Caco-2 (cell line): ENCODE measurements at regions of chr21 and their contacts with region 1.

Region 1: DNA sequence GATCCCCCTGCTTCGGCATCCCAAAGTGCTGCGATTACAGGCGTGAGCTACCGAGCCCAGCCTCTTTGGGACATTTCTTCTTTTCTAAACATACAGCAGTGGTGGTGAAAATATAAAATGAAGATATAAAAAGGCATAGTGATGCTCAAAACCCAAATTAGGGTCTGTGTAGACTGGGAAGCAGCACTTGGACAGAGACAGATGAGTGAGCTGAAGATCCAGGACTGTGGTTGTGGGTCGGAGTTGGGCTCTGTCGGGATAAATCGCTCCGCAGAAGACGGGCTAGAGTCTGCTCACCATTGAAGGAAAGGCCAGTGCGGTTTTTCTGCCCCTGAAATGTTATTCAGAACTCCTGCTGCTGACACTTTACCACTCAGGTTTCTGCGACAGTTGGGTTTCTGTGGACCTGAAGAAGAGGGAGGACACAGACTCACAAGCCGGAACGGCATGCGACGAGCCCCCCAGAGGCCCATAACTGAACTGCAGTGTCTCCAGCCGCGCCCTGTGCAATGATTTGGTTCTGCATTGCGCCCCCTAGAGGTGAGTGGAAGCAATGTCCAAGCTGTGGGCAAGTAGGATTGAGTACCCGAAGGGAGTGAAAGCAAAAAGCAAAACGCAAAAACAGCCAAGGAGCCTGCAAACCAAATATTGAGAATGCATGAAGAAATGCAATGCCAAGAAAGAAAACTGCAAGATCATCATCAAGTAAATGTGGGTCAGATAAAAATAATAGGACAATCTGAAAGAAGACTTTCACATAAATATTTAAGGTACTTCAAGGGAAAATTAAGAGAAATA is 66.6 kb downstream of the GABPA start:
- DNase-seq: peak; percentile 89 to 91
- H3K4me3 ChIP-seq: no peak overlapping the region
- H3K4me3 Mint-ChIP-seq: peak overlapping the region; percentile 45
- H3K27ac Mint-ChIP-seq: no peak overlapping the region
- H3K4me1 ChIP-seq: no peaks in the 10 kb centered on the region
- H3K4me1 Mint-ChIP-seq: peaks cover 7% of the 10 kb centered on the region
- H3K27me3 ChIP-seq: no peaks in the 10 kb centered on the region
- H3K27me3 Mint-ChIP-seq: peaks cover 21% of the 10 kb centered on the region
- CTCF ChIP-seq: peak; percentile 95 to 98

Region 2: GRCh38 chr21:25734904-25735645 is 66.3 kb before region 1 on chr21 and contains the starts of genes ATP5PF and GABPA:
- CTCF ChIA-PET with region 1: no interaction called
- POLR2A ChIA-PET with region 1: no interaction called
- intact Hi-C with region 1: loop called (anchors 5 kb)
- DNase-seq: peak; percentile 95 to 98
- H3K4me3 ChIP-seq: peak within 1 kb of the TSS; percentile 60
- H3K4me3 Mint-ChIP-seq: peak within 1 kb of the TSS; percentile 92
- H3K27ac Mint-ChIP-seq: peak within 1 kb of the TSS; percentile 98
- H3K4me1 ChIP-seq: peaks cover 7% of the 10 kb centered on the region; the same call in 1 of the 2 replicates
- H3K4me1 Mint-ChIP-seq: no peaks in the 10 kb centered on the region
- H3K27me3 ChIP-seq: no peaks in the 10 kb centered on the region
- H3K27me3 Mint-ChIP-seq: no peaks in the 10 kb centered on the region
- CTCF ChIP-seq: no peak
- total RNA-seq, gene ATP5PF: 156 and 175 TPM in 2 replicates
- total RNA-seq, gene GABPA: 17.4 and 20.3 TPM in 2 replicates

Region 3: GRCh38 chr21:25776440-25776839 is 25.0 kb before region 1 on chr21:
- CTCF ChIA-PET with region 1: no interaction called
- POLR2A ChIA-PET with region 1: no interaction called
- intact Hi-C with region 1: no loop called
- DNase-seq: no peak
- H3K4me3 ChIP-seq: no peak overlapping the region
- H3K4me3 Mint-ChIP-seq: no peak overlapping the region
- H3K27ac Mint-ChIP-seq: no peak overlapping the region
- H3K4me1 ChIP-seq: no peaks in the 10 kb centered on the region
- H3K4me1 Mint-ChIP-seq: no peaks in the 10 kb centered on the region
- H3K27me3 ChIP-seq: no peaks in the 10 kb centered on the region
- H3K27me3 Mint-ChIP-seq: no peaks in the 10 kb centered on the region
- CTCF ChIP-seq: no peak

Region 4: GRCh38 chr21:25813917-25814316 is 12.5 kb after region 1 on chr21:
- CTCF ChIA-PET with region 1: no interaction called
- POLR2A ChIA-PET with region 1: no interaction called
- intact Hi-C with region 1: no loop called
- DNase-seq: no peak
- H3K4me3 ChIP-seq: no peak overlapping the region
- H3K4me3 Mint-ChIP-seq: no peak overlapping the region
- H3K27ac Mint-ChIP-seq: no peak overlapping the region
- H3K4me1 ChIP-seq: no peaks in the 10 kb centered on the region
- H3K4me1 Mint-ChIP-seq: no peaks in the 10 kb centered on the region
- H3K27me3 ChIP-seq: no peaks in the 10 kb centered on the region
- H3K27me3 Mint-ChIP-seq: peaks cover 9% of the 10 kb centered on the region
- CTCF ChIP-seq: no peak

Region 5: DNA sequence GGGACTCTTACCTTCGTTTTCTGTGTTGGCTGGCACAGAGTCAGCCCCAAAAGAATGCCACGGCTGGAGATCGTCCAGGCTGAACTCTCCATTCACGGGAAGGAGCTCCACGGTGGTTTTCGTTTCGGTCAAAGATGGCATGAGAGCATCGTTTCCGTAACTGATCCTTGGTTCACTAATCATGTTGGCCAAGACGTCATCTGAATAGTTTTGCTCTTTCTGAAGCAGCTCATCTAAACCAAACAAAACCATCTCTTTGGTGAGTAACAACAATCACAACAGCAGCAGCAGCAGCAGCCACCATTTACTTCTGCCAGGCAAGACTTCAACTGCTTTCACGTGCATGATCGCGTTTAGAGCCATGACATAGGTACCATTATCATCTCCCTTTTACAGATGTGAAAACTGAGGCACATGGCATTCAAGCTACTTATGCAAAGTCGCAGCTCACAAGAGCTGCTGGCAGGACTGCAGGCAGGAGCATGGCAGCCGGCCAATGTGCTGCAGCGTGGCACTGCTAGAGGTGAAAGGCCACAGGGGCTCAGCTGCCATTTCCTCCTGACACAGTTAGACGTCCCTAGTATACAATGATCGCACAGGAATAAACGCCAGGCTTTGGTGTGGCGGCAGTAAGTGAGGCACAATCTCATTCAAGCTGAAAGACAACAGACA is 110.5 kb after region 1 on chr21:
- CTCF ChIA-PET with region 1: no interaction called
- POLR2A ChIA-PET with region 1: no interaction called
- intact Hi-C with region 1: no loop called
- DNase-seq: no peak
- H3K4me3 ChIP-seq: no peak overlapping the region
- H3K4me3 Mint-ChIP-seq: no peak overlapping the region
- H3K27ac Mint-ChIP-seq: no peak overlapping the region
- H3K4me1 ChIP-seq: no peaks in the 10 kb centered on the region
- H3K4me1 Mint-ChIP-seq: no peaks in the 10 kb centered on the region
- H3K27me3 ChIP-seq: no peaks in the 10 kb centered on the region
- H3K27me3 Mint-ChIP-seq: no peaks in the 10 kb centered on the region
- CTCF ChIP-seq: no peak